ENCODE measurements at regions of chr22 and their contacts with region 1.

Region 1: DNA sequence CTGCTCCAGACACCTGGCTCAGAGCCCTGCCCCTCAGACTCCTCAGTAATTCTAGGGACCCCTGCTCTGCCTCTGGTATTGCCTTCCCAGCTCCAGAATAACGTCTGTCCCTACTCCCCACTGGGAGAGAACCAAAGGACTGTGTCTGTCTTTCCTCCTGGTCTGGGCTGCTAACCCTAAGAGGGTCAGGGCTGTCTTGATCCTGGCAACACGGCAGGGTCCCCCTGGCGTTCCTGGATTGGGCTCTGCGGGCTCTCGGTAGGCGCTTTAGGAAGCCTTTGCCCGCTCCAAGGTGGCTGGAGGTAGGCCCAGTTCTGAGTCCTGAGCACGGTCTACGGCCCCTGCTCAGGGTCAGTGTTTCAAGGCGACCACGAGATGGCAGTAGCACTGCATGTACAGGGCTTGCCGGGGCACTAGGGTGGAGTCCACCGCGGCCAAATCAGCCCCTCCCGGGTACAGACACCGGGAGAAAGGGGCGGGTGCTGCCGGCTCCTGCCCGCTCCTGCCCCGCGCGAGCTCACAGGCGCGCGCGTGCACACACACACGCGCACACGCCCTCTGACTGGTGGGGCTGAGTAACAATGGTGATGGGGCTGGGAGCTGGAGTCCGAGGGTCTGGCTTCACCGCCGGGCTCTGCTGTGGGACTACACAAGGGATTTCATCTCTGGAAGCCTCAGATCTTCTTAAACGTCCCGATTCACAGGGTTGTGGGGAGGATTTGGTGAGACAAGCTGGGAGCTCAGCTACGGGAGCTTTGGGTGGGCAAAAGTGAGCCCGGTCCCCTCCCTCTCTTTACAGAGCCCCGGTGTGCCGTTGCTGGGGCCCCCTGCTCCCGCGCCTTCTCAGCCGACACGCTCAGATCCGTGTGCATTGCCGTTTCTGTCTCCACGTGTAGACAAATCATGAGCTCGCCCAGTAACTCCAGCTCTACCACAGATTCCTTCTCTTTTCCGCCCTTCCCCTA is 30.1 kb upstream of the HMOX1 start:
- DNase-seq: peak; percentile 93
- H3K4me3 ChIP-seq: peak overlapping the region; percentile 64
- H3K27ac ChIP-seq: peak overlapping the region; percentile 95
- H3K4me1 ChIP-seq: peaks cover 64% of the 10 kb centered on the region
- CTCF ChIP-seq: peak; percentile 80

Region 2: DNA sequence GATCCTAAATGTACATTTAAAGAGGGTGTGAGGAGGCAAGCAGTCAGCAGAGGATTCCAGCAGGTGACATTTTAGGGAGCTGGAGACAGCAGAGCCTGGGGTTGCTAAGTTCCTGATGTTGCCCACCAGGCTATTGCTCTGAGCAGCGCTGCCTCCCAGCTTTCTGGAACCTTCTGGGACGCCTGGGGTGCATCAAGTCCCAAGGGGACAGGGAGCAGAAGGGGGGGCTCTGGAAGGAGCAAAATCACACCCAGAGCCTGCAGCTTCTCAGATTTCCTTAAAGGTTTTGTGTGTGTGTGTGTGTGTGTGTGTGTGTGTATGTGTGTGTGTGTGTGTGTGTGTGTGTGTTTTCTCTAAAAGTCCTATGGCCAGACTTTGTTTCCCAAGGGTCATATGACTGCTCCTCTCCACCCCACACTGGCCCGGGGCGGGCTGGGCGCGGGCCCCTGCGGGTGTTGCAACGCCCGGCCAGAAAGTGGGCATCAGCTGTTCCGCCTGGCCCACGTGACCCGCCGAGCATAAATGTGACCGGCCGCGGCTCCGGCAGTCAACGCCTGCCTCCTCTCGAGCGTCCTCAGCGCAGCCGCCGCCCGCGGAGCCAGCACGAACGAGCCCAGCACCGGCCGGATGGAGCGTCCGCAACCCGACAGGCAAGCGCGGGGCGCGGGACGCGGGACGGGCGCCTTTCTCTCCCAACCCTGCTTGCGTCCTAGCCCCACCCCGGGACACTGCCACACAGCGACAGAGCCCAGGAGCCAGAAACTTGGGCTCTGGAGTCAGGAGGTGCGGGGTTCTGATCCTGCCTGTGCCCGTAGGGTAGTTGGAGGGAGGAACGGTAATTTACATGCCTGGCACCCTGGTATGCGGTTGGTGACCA is 30.0 kb after region 1 on chr22 and contains the start of gene HMOX1:
- CTCF ChIA-PET with region 1: no interaction called
- POLR2A ChIA-PET with region 1: interaction called, 3 read pairs
- intact Hi-C with region 1: loop called (anchors 2 kb)
- DNase-seq: peak; percentile 51
- H3K4me3 ChIP-seq: peak within 1 kb of the TSS; percentile 55
- H3K27ac ChIP-seq: no peak within 1 kb of the TSS
- H3K4me1 ChIP-seq: peaks cover 56% of the 10 kb centered on the region
- CTCF ChIP-seq: no peak
- total RNA-seq, gene HMOX1: 2.2 and 2.9 TPM in 2 replicates

Region 3: GRCh38 chr22:35409783-35410662 is 59.2 kb after region 1 on chr22:
- CTCF ChIA-PET with region 1: interaction called, 4 read pairs
- POLR2A ChIA-PET with region 1: interaction called, 10 read pairs
- intact Hi-C with region 1: loop called (anchors 1 kb)
- DNase-seq: peak; percentile 90
- H3K4me3 ChIP-seq: peak overlapping the region; percentile 50
- H3K27ac ChIP-seq: peak overlapping the region; percentile 90
- H3K4me1 ChIP-seq: peaks cover 80% of the 10 kb centered on the region
- CTCF ChIP-seq: no peak

Region 4: DNA sequence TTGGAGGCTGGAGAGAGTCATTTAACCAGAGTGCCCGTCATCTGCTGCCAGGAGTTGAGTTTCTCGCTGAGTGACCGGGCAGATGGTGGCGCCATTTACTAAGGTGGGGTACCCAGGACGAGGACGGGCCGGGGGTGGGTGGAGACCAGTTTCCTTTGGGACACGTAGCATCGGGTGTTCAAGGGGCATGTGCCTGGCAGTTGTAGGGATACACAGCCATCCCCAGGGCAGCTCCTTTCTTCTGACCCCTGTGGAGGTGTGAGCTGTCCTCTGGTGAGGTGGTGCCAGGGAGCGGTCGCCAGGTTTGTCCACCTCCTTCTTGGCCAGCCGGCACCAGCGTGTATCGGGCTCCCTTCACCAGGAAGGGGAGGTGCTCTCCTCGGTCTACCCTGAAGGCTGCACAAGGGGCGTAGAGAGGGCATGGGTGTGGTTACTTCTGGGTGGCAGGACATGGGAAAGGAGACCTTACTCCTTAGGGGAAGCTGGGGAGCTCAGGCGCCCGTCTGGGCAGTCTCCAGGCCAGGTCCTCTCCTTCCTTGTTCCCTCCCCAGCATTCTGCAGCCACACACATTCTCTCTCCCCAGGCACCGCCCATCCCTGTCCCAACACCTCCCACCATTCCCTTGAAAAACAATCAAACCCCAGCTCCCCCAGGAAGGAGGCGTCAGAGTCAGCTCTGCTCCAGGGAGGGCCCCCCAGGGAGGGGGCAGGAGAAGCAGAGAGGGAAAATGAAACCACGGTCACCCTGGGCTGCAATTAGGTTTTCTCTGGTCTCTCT is 276.6 kb after region 1 on chr22:
- CTCF ChIA-PET with region 1: no interaction called
- POLR2A ChIA-PET with region 1: no interaction called
- intact Hi-C with region 1: loop called (anchors 1 kb)
- DNase-seq: peak; percentile 83
- H3K4me3 ChIP-seq: peak overlapping the region; percentile 64
- H3K27ac ChIP-seq: peak overlapping the region; percentile 18
- H3K4me1 ChIP-seq: peaks cover 25% of the 10 kb centered on the region
- CTCF ChIP-seq: peak; percentile 83

Region 5: GRCh38 chr22:35914665-35915476 is 564.0 kb after region 1 on chr22:
- CTCF ChIA-PET with region 1: no interaction called
- POLR2A ChIA-PET with region 1: no interaction called
- intact Hi-C with region 1: loop called (anchors 10 kb)
- DNase-seq: peak; percentile 70
- H3K4me3 ChIP-seq: peak overlapping the region; percentile 59
- H3K27ac ChIP-seq: peak overlapping the region; percentile 76
- H3K4me1 ChIP-seq: peaks cover 99% of the 10 kb centered on the region
- CTCF ChIP-seq: no peak

Region 6: DNA sequence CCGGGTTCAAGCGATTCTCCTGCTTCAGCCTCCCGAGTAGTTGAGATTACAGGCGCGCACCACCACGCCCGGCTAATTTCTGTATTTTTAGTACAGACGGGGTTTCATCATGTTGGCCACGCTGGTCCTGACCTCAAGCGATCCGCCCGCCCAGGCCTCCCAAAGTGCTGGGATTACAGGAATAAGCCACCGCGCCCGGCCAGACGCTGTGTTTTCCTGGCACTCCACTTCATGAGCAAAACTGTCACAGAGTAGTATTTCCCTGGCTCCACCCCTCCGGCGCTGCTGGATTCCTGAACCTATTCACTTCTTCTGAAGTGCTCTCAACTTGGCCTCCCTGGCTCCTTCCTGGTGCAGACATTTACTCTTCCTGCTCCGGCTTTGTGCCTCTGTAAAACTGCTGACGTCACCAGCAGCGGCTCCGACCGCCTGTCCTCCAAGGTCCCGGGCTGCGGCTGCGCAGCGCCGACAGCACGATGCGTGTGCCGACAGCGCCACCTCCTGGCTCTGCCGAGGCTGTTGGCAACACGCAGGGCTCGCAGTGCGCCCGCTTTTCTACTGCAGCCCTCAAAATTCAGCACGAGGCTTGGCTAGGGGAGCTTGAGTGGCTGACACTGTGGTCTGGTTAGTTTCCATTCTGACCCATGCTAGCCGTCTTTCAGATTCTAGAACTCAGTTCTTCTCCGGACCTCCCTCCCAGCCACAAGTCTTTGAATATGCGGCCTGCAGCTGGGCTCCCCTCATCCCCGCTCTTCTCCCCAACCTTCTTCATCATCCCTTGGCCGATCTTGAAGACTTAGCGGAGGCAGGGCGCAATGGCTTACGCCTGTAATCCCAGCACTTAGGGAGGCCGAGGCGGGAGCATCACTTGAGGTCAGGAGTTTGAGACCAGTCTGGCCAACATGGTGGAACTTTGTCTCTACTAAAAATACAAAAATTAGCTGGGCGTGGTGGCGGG is 773.1 kb after region 1 on chr22:
- CTCF ChIA-PET with region 1: no interaction called
- POLR2A ChIA-PET with region 1: no interaction called
- intact Hi-C with region 1: loop called (anchors 1 kb)
- DNase-seq: peak; percentile 95
- H3K4me3 ChIP-seq: no peak overlapping the region
- H3K27ac ChIP-seq: no peak overlapping the region
- H3K4me1 ChIP-seq: peaks cover 3% of the 10 kb centered on the region
- CTCF ChIP-seq: peak; percentile 99

Measured in OCI-LY7 (cell line).